Activated T-helper 2 cell treated with anti-CD3 and anti-CD28 coated beads, Interferon-gamma antibody, Interleukin-2, Interleukin-4, amounts not matched to agents 10 μg/mL and 5 μg/mL and 100 μg/mL, durations not matched to agents 14 hours and 24 hours and 36 hours (primary cell): ENCODE measurements at regions of chr16 and their contacts with region 1.

Region 1: GRCh38 chr16:85717393-85718121 is 28.8 kb upstream of the GINS2 start:
- DNase-seq: peak; percentile 30
- H3K4me3 Mint-ChIP-seq: no peak overlapping the region
- H3K27ac Mint-ChIP-seq: no peak overlapping the region
- H3K4me1 Mint-ChIP-seq: no peaks in the 10 kb centered on the region
- H3K27me3 Mint-ChIP-seq: peaks cover 15% of the 10 kb centered on the region

Region 2: DNA sequence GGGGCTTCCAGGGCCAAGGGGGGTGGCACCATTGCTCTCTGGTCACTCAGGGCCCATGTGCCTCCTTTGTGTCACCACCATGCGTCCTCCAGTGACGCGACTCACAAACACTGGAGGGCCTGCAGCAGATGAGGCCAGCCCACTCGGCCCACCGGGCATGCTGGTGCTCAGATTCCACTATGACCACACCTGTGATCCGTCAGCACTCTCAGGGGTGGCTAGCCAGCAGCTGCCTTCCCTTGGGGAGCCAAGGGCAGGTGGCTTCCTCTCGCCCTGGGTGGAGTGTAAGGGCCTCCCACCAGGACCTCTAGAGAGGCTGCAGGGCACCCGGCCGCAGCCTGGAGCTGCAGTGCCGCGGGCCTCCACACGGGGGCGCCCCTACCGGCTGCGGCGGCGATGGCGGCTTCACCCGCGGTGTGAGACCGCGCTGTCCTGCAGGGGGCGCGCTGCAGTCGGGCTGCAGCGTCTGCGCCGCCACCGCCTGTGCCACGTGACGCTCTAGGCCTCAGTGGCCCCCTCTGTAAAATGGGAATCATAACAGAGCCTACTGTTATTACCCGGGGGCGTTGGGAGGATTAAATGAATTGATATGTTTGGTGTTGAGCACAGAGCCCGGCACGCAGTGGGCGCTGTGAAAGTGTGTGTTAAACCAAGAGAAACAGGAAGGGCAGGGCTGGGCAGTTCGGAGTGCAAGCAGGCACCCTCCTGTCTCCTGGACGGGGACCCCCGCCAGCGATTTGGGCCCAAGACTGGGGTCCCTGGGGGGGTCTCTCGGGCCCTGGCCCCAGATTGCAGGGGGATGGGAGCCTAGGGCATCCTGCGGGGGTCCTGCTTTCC is 296.8 kb before region 1 on chr16:
- intact Hi-C with region 1: loop called (anchors 1 kb)
- DNase-seq: peak; percentile 66
- H3K4me3 Mint-ChIP-seq: no peak overlapping the region
- H3K27ac Mint-ChIP-seq: no peak overlapping the region
- H3K4me1 Mint-ChIP-seq: peaks cover 2% of the 10 kb centered on the region
- H3K27me3 Mint-ChIP-seq: no peaks in the 10 kb centered on the region

Region 3: GRCh38 chr16:85659805-85660495 is 57.6 kb before region 1 on chr16:
- intact Hi-C with region 1: loop called (anchors 1 kb)
- DNase-seq: peak; percentile 40
- H3K4me3 Mint-ChIP-seq: no peak overlapping the region
- H3K27ac Mint-ChIP-seq: no peak overlapping the region
- H3K4me1 Mint-ChIP-seq: no peaks in the 10 kb centered on the region
- H3K27me3 Mint-ChIP-seq: no peaks in the 10 kb centered on the region

Region 4: DNA sequence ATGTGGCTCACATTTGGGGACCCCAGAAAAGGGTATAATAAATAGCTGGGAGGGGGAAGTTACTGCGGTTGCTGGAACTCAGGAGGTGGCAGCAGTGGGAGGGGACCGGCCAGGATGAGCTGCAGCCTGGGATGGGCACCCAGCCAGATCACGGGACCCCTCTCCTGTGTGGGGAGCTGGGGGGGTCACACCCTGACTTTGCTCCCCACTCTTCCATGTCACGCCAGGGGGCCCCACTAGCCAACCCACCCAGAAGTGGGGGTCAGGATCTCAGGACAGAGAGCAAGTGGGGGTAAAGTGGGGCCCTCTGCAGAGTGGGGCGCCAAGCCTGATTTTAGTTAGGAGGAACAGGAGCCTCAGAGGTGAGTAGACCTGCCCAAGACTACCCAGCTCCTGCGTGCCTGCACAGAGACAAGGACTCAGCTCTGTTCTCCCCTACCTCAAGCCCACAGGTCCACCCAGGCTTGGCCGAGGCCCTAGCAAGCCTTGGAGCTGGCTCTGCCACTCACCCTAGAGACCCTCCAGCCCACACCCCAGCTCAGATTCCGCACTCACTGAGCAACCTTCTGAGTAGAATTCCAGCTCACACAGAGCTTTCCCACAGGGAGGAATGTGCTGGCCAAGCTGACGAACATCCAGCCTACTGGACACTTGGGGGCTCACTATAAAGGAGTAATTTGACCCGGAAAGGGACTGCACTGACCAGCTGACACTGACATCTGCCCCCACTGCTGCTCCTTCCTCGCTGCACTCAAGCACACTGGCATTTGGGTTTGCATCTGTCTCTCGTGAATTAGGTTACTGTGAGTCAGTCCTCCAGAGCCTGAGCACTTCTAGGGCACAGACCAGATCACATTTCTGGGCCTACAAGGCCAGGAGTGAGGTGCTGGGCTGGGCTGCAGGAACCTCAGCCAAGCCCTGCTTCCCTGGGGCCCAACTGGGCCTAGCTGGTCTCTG is 1289.5 kb after region 1 on chr16:
- intact Hi-C with region 1: no loop called
- DNase-seq: no peak
- H3K4me3 Mint-ChIP-seq: no peak overlapping the region
- H3K27ac Mint-ChIP-seq: no peak overlapping the region
- H3K4me1 Mint-ChIP-seq: no peaks in the 10 kb centered on the region
- H3K27me3 Mint-ChIP-seq: no peaks in the 10 kb centered on the region